Endothelial cell of umbilical vein (primary cell): ENCODE measurements at regions of chr19 and their contacts with region 1.

Region 1: DNA sequence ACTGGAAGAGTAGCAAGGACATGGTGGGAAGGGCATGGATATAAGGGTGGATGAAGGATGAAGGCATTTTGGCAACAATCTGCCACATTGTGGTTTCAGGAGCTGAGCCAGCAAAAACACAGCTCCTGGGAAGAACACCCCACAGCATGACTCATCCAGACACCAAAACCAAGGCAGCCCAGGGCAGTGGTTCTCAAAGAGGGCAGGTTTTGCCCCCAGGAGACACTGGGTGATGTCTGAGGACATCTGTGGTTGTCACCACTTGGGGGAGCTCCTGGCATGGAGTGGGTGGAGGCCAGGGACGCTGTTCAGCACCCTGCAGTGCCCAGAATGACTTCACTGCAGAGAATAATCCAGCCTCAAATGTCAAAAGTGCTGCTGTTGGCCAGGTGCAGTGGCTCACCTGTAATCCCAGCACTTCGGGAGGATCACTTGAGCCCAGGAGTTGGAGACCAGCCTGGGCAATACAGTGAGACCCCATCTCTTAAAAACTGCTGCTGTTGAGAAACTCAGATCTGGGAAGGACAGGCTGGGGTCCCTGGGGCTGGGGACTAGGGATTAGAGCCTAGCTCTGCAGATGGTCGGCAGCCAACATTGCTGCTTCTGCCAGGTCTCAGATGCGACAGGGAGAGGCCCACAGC is 16.1 kb downstream of the ZFR2 start:
- DNase-seq: peak; percentile 30
- H3K4me3 ChIP-seq: no peak overlapping the region
- H3K27ac ChIP-seq: no peak overlapping the region
- H3K4me1 ChIP-seq: no peaks in the 10 kb centered on the region
- H3K27me3 ChIP-seq: no peaks in the 10 kb centered on the region
- CTCF ChIP-seq: peak; percentile 29 to 53
- POLR2A ChIP-seq: no peak

Region 2: DNA sequence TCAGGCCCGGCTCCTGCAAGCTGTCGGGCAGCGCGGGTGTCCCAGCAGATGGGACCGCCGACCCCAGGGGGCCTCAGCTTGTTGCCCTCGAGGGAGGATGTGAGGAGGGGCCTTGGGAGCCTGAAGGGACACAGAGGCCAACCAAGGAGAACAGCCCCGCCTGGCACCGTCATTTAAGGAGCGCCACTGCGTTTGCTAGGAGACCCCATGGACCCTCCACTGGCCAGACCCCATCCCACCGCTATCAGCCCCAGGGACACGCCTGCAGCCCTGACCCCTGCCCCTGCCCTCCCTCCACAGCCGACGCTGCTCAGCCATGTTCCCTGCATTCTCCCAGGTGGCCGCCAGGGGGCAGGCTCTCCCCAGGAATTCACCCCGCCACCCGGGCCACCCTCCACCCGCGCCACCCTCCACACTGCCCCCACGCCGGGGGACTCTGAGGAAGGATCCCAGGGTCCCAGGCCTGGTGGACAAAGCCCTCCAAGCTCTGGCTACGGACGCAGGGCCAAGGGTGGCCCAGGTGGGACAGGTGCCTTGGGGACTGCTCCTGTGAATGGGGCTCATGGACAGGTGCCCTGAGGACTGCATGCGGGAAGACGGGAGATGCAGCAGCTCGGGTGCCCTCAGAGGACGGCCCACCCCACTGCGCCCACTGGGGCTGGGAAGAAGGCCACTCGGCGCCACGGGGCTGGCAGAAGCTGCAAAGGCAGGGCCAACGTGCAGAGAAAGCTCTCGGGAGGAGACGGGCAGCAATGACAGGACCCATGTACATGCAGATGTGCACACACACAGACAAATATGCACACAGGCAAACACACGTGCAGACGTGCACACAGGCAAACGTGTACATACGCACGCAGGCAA is 186.8 kb before region 1 on chr19:
- CTCF ChIA-PET with region 1: no interaction called
- POLR2A ChIA-PET with region 1: no interaction called
- dilution Hi-C with region 1: no loop called
- intact Hi-C with region 1: no loop called
- DNase-seq: peak; percentile 46
- H3K4me3 ChIP-seq: no peak overlapping the region
- H3K27ac ChIP-seq: no peak overlapping the region
- H3K4me1 ChIP-seq: peaks cover 10% of the 10 kb centered on the region
- H3K27me3 ChIP-seq: no peaks in the 10 kb centered on the region
- CTCF ChIP-seq: peak; percentile 66 to 90
- POLR2A ChIP-seq: no peak

Region 3: DNA sequence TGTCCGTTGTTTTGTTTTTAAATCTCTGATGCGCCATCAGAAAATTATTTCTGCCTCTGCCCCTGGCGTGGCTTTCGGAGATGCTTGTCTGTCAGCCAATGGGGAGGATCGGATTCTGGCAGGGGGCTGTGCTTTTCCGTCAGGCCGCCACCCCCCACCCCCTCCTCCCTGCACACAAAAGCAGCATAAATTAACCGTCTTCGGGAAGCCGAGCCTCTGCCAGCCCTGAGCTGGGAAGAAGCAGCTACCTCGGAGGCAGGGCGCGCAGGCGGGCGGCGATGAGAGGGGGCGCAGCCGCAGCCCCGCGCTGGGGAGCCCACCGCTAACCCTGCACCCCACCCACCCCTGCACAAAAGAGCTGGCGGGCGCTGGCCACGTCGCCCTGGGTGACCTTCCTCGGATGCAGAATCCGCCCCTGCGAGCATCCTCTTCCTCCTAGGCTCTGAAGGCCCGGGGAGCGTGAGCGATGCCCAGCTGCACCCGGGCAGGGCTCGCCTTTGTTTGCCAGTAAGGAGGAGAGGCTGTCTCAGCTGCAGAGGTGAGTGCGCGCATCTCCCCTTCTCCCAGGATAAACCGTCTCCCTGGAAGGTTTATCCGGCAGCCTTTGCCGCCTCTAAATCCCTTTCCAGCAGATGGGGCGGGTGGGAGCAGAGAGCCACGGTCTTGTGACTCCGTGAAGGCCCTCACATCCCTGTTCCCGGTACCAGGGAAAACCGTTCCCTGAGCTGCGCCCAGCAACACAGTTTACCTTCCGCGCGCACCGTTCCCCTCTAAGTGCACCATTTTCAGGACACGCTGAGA is 27.9 kb after region 1 on chr19 and contains the start of gene ATCAY:
- CTCF ChIA-PET with region 1: no interaction called
- POLR2A ChIA-PET with region 1: no interaction called
- dilution Hi-C with region 1: no loop called
- intact Hi-C with region 1: loop called (anchors 1 kb)
- DNase-seq: no peak
- H3K4me3 ChIP-seq: no peak within 1 kb of the TSS
- H3K27ac ChIP-seq: no peak within 1 kb of the TSS
- H3K4me1 ChIP-seq: no peaks in the 10 kb centered on the region
- H3K27me3 ChIP-seq: peaks cover 17% of the 10 kb centered on the region in 2 experiments
- CTCF ChIP-seq: no peak
- POLR2A ChIP-seq: no peak
- total RNA-seq, gene ATCAY: not detected in 2 replicates